ENCODE measurements at regions of chr20 and their contacts with region 1.

Region 1: GRCh38 chr20:49323622-49324238 is 45.9 kb upstream of the ZNFX1 start:
- DNase-seq: peak; percentile 89
- H3K4me3 ChIP-seq: no peak overlapping the region
- H3K27ac ChIP-seq: peak overlapping the region; percentile 19
- H3K4me1 ChIP-seq: peaks cover 12% of the 10 kb centered on the region
- H3K27me3 ChIP-seq: peaks cover 31 to 33% of the 10 kb centered on the region in 2 experiments
- CTCF ChIP-seq: peak; percentile 12 to 30
- POLR2A ChIP-seq: no peak

Region 2: DNA sequence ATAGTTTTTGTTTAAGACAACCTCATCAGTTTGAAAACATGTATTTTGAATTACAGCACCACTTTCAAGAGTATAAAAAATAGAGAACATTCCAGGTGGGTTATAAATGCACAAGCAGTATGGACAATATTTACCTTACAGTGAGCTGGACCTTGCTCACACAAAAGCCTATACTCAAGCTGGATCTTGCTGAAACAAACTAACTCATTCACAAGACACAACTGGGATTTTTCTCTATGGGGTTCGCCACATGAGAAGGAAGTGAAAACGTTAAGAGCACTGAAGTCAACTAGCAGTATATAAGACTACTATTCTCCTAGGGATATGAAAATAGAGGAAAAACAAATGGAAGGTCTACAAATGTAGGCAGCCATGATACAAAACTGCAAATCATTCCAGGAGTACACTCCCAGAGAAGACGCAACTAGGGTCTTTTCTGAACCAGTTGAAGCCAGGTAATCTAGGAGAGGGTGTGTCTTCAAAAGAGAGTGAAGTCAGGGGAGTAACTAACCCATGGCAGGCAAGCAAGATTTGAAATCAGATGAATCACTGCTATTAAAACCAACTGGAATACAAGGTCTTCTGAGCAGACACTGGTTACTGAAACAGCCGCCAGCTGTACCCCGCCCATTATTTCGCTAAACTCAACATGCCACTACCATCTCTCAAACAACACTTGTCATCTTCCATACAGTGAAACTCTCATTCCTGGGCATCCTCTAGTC is 162.1 kb before region 1 on chr20:
- CTCF ChIA-PET with region 1: no interaction called
- POLR2A ChIA-PET with region 1: no interaction called
- dilution Hi-C with region 1: no loop called
- intact Hi-C with region 1: no loop called
- DNase-seq: no peak
- H3K4me3 ChIP-seq: no peak overlapping the region
- H3K27ac ChIP-seq: no peak overlapping the region
- H3K4me1 ChIP-seq: peaks cover 2% of the 10 kb centered on the region
- H3K27me3 ChIP-seq: no peaks in the 10 kb centered on the region
- CTCF ChIP-seq: no peak
- POLR2A ChIP-seq: no peak

Region 3: DNA sequence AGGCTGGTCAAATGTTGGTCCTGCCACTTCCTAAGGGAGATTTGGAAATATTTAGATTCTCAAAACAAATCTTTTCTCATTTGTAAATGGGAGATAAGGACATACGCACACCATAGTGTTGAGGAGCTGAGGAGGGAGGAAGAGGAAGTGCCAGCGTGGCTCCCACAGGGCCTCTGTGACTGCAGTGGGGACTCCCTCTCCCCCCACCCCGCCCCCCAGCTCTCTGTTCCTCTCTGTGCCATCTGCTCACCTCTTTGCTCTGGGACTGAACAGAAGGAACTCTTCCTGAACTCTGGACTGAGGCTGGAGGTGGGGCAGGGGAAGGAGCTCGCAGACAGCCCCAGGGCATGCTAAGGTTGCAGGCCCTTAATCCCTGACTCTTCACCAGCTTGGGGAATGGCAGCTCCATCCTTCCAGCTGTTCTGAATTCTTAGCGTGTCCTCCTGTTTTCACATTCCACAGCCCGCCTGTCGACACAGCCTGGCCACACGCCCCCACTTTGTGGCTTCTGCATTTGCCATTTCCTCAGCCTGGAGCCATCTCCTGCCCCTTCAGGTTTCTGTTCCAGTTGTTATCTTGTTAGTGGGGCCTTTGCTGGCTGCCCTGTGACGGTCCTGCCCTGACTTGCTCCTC is 93.1 kb before region 1 on chr20:
- CTCF ChIA-PET with region 1: no interaction called
- POLR2A ChIA-PET with region 1: no interaction called
- dilution Hi-C with region 1: no loop called
- intact Hi-C with region 1: no loop called
- DNase-seq: no peak
- H3K4me3 ChIP-seq: no peak overlapping the region
- H3K27ac ChIP-seq: no peak overlapping the region
- H3K4me1 ChIP-seq: no peaks in the 10 kb centered on the region
- H3K27me3 ChIP-seq: no peaks in the 10 kb centered on the region
- CTCF ChIP-seq: no peak
- POLR2A ChIP-seq: no peak

Region 4: GRCh38 chr20:49278036-49278817 is 45.5 kb before region 1 on chr20 and contains the start of gene ZNFX1:
- CTCF ChIA-PET with region 1: interaction called, 14 read pairs
- POLR2A ChIA-PET with region 1: interaction called, 7 read pairs
- dilution Hi-C with region 1: no loop called
- intact Hi-C with region 1: loop called (anchors 2 kb)
- DNase-seq: peak; percentile 98
- H3K4me3 ChIP-seq: peak within 1 kb of the TSS; percentile 83 to 97 (median 95)
- H3K27ac ChIP-seq: peak within 1 kb of the TSS; percentile 73
- H3K4me1 ChIP-seq: peaks cover 43% of the 10 kb centered on the region
- H3K27me3 ChIP-seq: no peaks in the 10 kb centered on the region
- CTCF ChIP-seq: no peak
- POLR2A ChIP-seq: peak; percentile 100
- total RNA-seq, gene ZNFX1: 26.5 and 27.9 TPM in 2 replicates

Region 5: GRCh38 chr20:49286689-49287551 is 36.8 kb before region 1 on chr20:
- CTCF ChIA-PET with region 1: interaction called, 13 read pairs
- POLR2A ChIA-PET with region 1: no interaction called
- dilution Hi-C with region 1: no loop called
- intact Hi-C with region 1: no loop called
- DNase-seq: no peak
- H3K4me3 ChIP-seq: no peak overlapping the region
- H3K27ac ChIP-seq: peak overlapping the region; percentile 48
- H3K4me1 ChIP-seq: peaks cover 56% of the 10 kb centered on the region
- H3K27me3 ChIP-seq: no peaks in the 10 kb centered on the region
- CTCF ChIP-seq: no peak
- POLR2A ChIP-seq: no peak